ENCODE measurements at regions of chr14 and their contacts with region 1.

Region 1: DNA sequence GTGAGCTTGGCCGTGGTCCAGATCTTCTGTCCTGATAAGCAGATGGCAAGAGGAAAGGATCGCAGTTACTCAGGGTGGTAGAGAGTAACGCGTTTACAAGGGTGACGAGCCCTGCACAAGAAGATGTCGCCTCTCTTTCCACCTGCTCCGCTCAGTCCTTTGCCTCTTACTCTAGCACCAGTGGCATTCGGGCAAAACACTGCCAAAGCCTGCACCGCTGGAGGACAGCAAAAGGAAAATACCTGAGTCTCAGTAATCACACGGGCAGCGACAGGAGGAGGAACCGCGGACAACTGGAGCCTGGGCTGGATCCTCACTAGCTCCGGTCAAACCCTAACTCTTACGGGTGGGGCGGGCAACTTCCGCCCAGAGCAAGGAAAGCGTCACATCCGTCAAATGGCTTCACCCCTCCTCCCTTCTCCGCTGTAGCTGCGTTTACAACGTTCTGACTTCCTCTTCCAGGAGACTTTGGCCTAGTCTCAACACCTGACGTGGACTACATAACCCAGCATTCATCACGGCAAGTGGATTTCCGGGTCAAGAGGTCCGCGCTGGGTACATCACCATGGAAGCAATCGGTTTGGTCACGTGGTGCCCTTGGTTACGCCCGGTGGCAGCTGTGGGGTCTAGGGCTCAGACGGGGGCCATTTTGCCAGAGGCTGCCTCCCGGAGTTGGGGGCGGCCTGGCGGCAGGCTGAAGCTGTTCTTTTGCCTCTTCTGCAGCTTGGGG is at the starts of genes KLHL28 and TOGARAM1:
- DNase-seq: peak; percentile 96
- H3K4me3 Mint-ChIP-seq: no peak within 1 kb of the TSS
- H3K27ac Mint-ChIP-seq: no peak within 1 kb of the TSS
- H3K4me1 Mint-ChIP-seq: peaks cover 40% of the 10 kb centered on the region
- H3K27me3 Mint-ChIP-seq: no peaks in the 10 kb centered on the region
- total RNA-seq, gene KLHL28: 15.9 and 16.9 TPM in 2 replicates
- total RNA-seq, gene TOGARAM1: 9.3 TPM in 2 replicates

Region 2: GRCh38 chr14:44756554-44756953 is 205.2 kb before region 1 on chr14:
- intact Hi-C with region 1: no loop called
- DNase-seq: no peak
- H3K4me3 Mint-ChIP-seq: no peak overlapping the region
- H3K27ac Mint-ChIP-seq: no peak overlapping the region
- H3K4me1 Mint-ChIP-seq: no peaks in the 10 kb centered on the region
- H3K27me3 Mint-ChIP-seq: no peaks in the 10 kb centered on the region

Region 3: GRCh38 chr14:44897045-44897844 is 64.5 kb before region 1 on chr14:
- intact Hi-C with region 1: loop called (anchors 1 kb)
- DNase-seq: peak; percentile 85
- H3K4me3 Mint-ChIP-seq: peak overlapping the region; percentile 93
- H3K27ac Mint-ChIP-seq: peak overlapping the region; percentile 72
- H3K4me1 Mint-ChIP-seq: peaks cover 24% of the 10 kb centered on the region
- H3K27me3 Mint-ChIP-seq: peaks cover 6% of the 10 kb centered on the region

Region 4: DNA sequence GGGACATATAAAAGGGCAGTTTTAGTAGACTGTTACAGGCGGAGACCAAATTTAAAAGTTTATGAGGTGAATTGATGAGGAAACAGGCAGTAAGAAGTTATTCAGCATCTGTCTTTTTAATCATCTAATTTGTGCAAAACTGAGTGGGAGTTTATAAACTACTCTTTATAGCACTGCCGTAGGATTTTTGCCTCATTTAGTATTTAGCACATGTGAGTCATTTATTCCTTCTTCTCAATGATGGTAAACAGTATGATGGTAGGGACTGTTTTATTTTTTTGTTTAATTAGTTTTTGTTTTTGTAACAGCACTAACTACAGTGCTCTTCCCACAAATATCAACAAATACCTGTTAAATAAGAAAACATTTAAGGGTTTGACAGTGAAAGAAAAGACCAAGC is 20.8 kb after region 1 on chr14:
- intact Hi-C with region 1: loop called (anchors 1 kb)
- DNase-seq: no peak
- H3K4me3 Mint-ChIP-seq: no peak overlapping the region
- H3K27ac Mint-ChIP-seq: peak overlapping the region; percentile 47
- H3K4me1 Mint-ChIP-seq: peaks cover 22% of the 10 kb centered on the region
- H3K27me3 Mint-ChIP-seq: no peaks in the 10 kb centered on the region

Region 5: DNA sequence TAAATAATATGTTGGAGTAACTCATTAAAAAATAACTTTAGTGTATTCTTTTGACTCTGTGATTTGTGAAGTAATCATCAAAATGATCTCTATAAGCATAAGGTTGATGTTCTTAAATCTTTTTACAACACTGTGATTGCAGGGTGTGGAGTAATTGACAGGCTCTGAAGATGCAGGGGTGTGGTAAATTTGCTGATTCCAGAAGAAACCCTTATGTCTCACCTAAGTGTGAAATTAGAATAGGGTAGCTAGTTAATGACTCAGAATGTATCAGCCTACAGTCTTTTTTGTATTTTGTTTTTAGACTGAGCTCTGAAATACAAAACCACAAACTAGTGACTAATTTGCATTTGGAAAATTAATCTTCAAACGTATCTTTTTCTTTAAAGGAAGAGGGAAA is 128.0 kb after region 1 on chr14:
- intact Hi-C with region 1: loop called (anchors 1 kb)
- DNase-seq: no peak
- H3K4me3 Mint-ChIP-seq: peak overlapping the region; percentile 6
- H3K27ac Mint-ChIP-seq: peak overlapping the region; percentile 38
- H3K4me1 Mint-ChIP-seq: peaks cover 71% of the 10 kb centered on the region
- H3K27me3 Mint-ChIP-seq: no peaks in the 10 kb centered on the region

Region 6: DNA sequence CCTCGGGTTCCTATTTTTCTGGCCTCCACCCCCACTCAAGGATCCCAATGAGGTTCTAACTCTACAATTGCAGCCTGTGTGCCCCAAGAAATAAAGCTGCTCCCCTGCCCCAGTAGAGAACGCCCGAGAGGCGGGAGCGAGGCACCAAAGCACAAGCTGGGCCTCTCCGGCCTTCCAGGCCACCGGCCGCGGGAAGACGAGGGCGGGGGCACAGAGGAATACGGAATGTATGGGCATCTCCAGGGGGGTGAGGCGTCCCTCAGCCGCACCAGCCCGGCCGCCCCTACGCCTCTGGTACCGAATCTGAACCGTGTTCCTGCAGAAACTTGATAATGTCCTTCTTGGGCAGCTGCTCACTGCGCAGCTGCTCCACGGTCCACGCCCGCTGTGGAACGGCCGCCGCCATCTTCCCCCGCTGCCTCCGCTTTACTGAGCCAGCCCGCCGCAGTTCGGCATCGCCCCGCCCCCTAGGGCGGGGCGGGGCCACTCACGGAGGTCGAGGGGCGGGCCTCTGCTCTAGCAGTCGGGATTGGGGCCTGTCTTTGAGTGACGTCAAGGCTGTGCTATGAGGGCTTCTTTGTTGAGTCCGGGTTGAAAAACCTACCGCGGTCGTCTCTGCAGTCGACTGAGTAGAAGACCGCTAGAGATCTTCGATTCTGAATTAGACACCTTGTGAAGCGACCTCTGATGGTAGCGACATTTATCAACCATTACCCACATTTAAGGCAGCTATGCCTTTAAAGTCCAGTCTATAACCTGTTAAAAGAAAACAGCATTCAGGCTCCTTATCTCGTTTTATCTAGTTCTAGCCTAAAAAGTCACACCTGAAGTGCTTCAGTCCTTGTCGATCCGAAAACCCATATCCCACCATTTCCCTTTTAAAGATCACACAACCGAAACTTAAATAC is 172.5 kb after region 1 on chr14 and contains the start of gene FKBP3:
- intact Hi-C with region 1: loop called (anchors 1 kb)
- DNase-seq: peak; percentile 93
- H3K4me3 Mint-ChIP-seq: peak within 1 kb of the TSS; percentile 98
- H3K27ac Mint-ChIP-seq: peak within 1 kb of the TSS; percentile 97
- H3K4me1 Mint-ChIP-seq: peaks cover 34% of the 10 kb centered on the region
- H3K27me3 Mint-ChIP-seq: no peaks in the 10 kb centered on the region
- total RNA-seq, gene FKBP3: 58.0 and 59.3 TPM in 2 replicates

Region 7: GRCh38 chr14:45267071-45267470 is 305.3 kb after region 1 on chr14:
- intact Hi-C with region 1: loop called (anchors 1 kb)
- DNase-seq: no peak
- H3K4me3 Mint-ChIP-seq: no peak overlapping the region
- H3K27ac Mint-ChIP-seq: no peak overlapping the region
- H3K4me1 Mint-ChIP-seq: peaks cover 5% of the 10 kb centered on the region
- H3K27me3 Mint-ChIP-seq: peaks cover 7% of the 10 kb centered on the region